Common myeloid progenitor, CD34-positive (primary cell): ENCODE measurements at regions of chr17 and their contacts with region 1.

Region 1: GRCh38 chr17:4908301-4908700 is 5.4 kb upstream of the CHRNE start:
- DNase-seq: no peak
- H3K4me3 ChIP-seq: no peak overlapping the region
- H3K27ac ChIP-seq: no peak overlapping the region
- H3K4me1 ChIP-seq: peaks cover 0 to 20% (median 15%) of the 10 kb centered on the region in 4 experiments
- H3K27me3 ChIP-seq: peaks cover 0 to 5% (median 0%) of the 10 kb centered on the region in 5 experiments

Region 2: GRCh38 chr17:4782652-4783051 is 125.6 kb before region 1 on chr17:
- CTCF ChIA-PET with region 1: no interaction called
- POLR2A ChIA-PET with region 1: no interaction called
- DNase-seq: peak in 1 of 3 donors; percentile 26
- H3K4me3 ChIP-seq: no peak overlapping the region
- H3K27ac ChIP-seq: no peak overlapping the region
- H3K4me1 ChIP-seq: peaks cover 0 to 23% (median 11%) of the 10 kb centered on the region in 4 experiments
- H3K27me3 ChIP-seq: peaks cover 4 to 70% (median 33%) of the 10 kb centered on the region in 5 experiments

Region 3: GRCh38 chr17:4934173-4934979 is 26.1 kb after region 1 on chr17:
- CTCF ChIA-PET with region 1: interaction called, 16 read pairs
- POLR2A ChIA-PET with region 1: interaction called, 8 read pairs
- DNase-seq: peak; percentile 52 to 80 (median 73)
- H3K4me3 ChIP-seq: peak overlapping the region in 5 of 7 experiments; percentile 11 to 66 (median 54)
- H3K27ac ChIP-seq: peak overlapping the region in 1 of 2 experiments; percentile 9
- H3K4me1 ChIP-seq: peaks cover 3 to 75% (median 55%) of the 10 kb centered on the region in 4 experiments
- H3K27me3 ChIP-seq: no peaks in the 10 kb centered on the region

Region 4: GRCh38 chr17:4939796-4940624 is 31.7 kb after region 1 on chr17 and contains the starts of genes RNF167 and SLC25A11:
- CTCF ChIA-PET with region 1: interaction called, 16 read pairs
- POLR2A ChIA-PET with region 1: interaction called, 8 read pairs
- DNase-seq: peak; percentile 100
- H3K4me3 ChIP-seq: peak within 1 kb of the TSS; percentile 75 to 97 (median 94)
- H3K27ac ChIP-seq: peak within 1 kb of the TSS; percentile 87 to 96
- H3K4me1 ChIP-seq: peaks cover 18 to 89% (median 63%) of the 10 kb centered on the region in 4 experiments
- H3K27me3 ChIP-seq: no peaks in the 10 kb centered on the region

Region 5: DNA sequence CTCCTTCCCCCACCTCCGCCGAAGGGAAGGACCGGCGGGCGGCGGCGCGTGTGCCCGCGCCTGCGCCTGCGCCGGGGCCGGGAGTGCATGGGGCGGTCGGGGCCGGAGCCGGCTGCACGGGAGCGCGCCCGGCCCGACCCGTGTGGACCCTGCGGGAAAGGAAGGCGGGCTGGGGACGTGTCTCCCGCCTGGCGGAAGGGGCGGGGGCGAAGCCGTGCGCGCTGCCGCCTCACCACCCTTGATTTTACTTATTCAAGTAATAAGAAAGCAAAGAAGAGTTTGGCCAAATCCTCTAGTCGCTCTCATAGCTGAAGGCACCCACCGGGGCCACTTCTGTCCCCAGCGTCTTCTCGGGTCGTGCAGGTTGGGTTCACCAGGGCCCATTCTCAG is 40.6 kb after region 1 on chr17:
- CTCF ChIA-PET with region 1: interaction called, 35 read pairs
- POLR2A ChIA-PET with region 1: no interaction called
- DNase-seq: peak; percentile 83 to 88 (median 84)
- H3K4me3 ChIP-seq: peak overlapping the region; percentile 37 to 98 (median 90)
- H3K27ac ChIP-seq: peak overlapping the region; percentile 74 to 87
- H3K4me1 ChIP-seq: peaks cover 24 to 59% (median 55%) of the 10 kb centered on the region in 4 experiments
- H3K27me3 ChIP-seq: no peaks in the 10 kb centered on the region

Region 6: DNA sequence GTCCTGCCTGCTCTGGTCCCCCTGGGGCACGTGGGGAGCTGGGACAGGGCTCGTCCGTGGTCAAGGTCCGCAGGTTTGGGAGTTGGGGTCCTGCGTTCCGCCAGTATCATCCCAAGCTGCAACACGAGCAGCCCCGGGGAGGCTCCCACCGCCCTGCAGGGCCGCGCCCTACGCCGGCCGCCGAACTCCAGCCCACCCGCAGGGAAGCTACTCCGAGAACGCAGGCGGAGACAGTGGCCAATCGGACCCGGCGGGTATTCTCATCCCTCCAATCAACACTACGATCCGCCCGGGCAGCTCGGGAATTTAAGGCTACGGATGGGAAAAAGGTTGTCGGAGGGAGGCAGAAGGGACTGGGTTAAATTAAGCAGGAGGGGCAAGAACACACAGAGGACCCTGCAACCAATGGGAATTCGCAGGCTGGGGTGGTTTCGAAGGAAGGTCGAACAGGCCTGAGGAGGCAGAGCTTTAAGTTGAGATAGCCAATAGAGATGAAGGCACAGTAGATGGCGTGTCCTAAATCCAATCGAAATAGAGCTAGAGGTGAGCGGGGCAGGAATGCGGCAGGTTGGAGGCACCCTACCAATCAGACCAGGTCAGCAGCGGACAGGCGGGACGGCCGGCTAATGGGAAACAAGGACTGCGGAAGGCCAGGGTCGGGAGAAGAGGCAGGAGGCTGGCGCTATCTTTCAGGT is 58.7 kb after region 1 on chr17:
- CTCF ChIA-PET with region 1: interaction called, 23 read pairs
- POLR2A ChIA-PET with region 1: interaction called, 6 read pairs
- DNase-seq: peak; percentile 100
- H3K4me3 ChIP-seq: peak overlapping the region; percentile 80 to 94 (median 89)
- H3K27ac ChIP-seq: peak overlapping the region; percentile 81 to 88
- H3K4me1 ChIP-seq: peaks cover 6 to 28% (median 21%) of the 10 kb centered on the region in 4 experiments
- H3K27me3 ChIP-seq: no peaks in the 10 kb centered on the region

Region 7: GRCh38 chr17:4980644-4981216 is 72.4 kb after region 1 on chr17:
- CTCF ChIA-PET with region 1: interaction called, 19 read pairs
- POLR2A ChIA-PET with region 1: no interaction called
- DNase-seq: peak; percentile 62 to 81 (median 75)
- H3K4me3 ChIP-seq: peak overlapping the region in 1 of 7 experiments; percentile 16
- H3K27ac ChIP-seq: no peak overlapping the region
- H3K4me1 ChIP-seq: peaks cover 14 to 33% (median 29%) of the 10 kb centered on the region in 4 experiments
- H3K27me3 ChIP-seq: no peaks in the 10 kb centered on the region

Region 8: GRCh38 chr17:4986951-4987766 is 78.9 kb after region 1 on chr17 and contains the start of gene CAMTA2:
- CTCF ChIA-PET with region 1: interaction called, 19 read pairs
- POLR2A ChIA-PET with region 1: no interaction called
- DNase-seq: peak; percentile 80 to 85 (median 81)
- H3K4me3 ChIP-seq: peak within 1 kb of the TSS; percentile 74 to 94 (median 80)
- H3K27ac ChIP-seq: peak within 1 kb of the TSS; percentile 58 to 79
- H3K4me1 ChIP-seq: peaks cover 8 to 26% (median 24%) of the 10 kb centered on the region in 4 experiments
- H3K27me3 ChIP-seq: no peaks in the 10 kb centered on the region